ENCODE measurements at regions of chr1 and their contacts with region 1.

Region 1: GRCh38 chr1:69172003-69173000 is 395.4 kb upstream of the LRRC7 start:
- DNase-seq: no peak
- H3K4me3 Mint-ChIP-seq: no peak overlapping the region
- H3K27ac Mint-ChIP-seq: no peak overlapping the region
- H3K4me1 Mint-ChIP-seq: no peaks in the 10 kb centered on the region
- H3K27me3 Mint-ChIP-seq: no peaks in the 10 kb centered on the region
- CTCF ChIP-seq: no peak

Region 2: DNA sequence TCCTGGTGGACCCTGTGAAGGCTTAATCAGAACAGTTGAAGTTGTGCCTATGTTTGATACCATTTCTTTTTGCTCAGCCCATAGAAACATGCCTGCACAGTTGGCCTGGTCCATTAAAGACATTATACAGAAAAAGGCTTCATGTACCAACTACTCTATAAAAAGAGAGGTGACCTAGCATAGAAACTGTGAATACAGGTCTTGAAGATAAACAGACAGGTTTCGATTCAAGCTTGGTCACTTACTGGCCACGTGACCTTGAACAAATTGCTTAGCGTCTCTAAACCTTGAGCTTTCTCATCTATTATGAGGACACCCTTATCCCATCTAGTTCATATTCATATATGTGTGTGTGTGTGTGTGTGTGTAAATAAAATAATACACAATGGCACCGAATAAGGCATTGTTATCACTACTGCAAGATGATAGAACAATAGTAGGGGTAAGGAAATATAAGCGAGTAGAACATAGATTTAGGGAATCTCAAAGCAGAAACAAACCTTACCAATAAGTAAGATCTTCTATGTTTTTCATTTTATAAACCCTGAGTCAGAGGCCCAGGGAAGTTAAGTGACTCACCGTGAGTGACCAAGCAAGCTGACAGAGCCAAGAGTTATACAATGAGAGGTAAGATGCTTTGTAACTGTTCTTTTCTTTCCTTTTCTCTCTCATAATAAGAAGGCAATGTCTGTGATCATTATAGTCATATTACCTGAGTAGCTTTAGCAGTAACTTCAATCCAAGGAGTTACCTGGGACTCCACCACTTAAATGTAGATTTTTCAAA is 198.7 kb before region 1 on chr1:
- CTCF ChIA-PET with region 1: no interaction called
- intact Hi-C with region 1: loop called (anchors 1 kb)
- DNase-seq: no peak
- H3K4me3 Mint-ChIP-seq: no peak overlapping the region
- H3K27ac Mint-ChIP-seq: no peak overlapping the region
- H3K4me1 Mint-ChIP-seq: no peaks in the 10 kb centered on the region
- H3K27me3 Mint-ChIP-seq: no peaks in the 10 kb centered on the region
- CTCF ChIP-seq: no peak

Region 3: GRCh38 chr1:69878338-69878737 is 706.0 kb after region 1 on chr1:
- CTCF ChIA-PET with region 1: no interaction called
- intact Hi-C with region 1: no loop called
- DNase-seq: no peak
- H3K4me3 Mint-ChIP-seq: no peak overlapping the region
- H3K27ac Mint-ChIP-seq: no peak overlapping the region
- H3K4me1 Mint-ChIP-seq: no peaks in the 10 kb centered on the region
- H3K27me3 Mint-ChIP-seq: no peaks in the 10 kb centered on the region
- CTCF ChIP-seq: no peak

Measured in Calu3 (cell line).